Spleen (tissue), 13 donors: ENCODE measurements at regions of chr12 and their contacts with region 1.

Region 1: GRCh38 chr12:109713187-109713984 is at the start of gene FAM222A:
- DNase-seq: peak; percentile 99
- H3K4me3 ChIP-seq: peak within 1 kb of the TSS; percentile 72 to 95 (median 90)
- H3K27ac ChIP-seq: peak within 1 kb of the TSS in 7 of 8 donors; percentile 26 to 79 (median 68)
- H3K4me1 ChIP-seq: peaks cover 4 to 56% (median 26%) of the 10 kb centered on the region in 6 donors
- H3K27me3 ChIP-seq: peaks cover 0 to 89% (median 23%) of the 10 kb centered on the region in 7 donors
- CTCF ChIP-seq: peak in 6 of 11 experiments; percentile 28 to 61 (median 40)
- POLR2A ChIP-seq: peak in 1 of 3 donors; percentile 49
- total RNA-seq, gene FAM222A: 13.9 to 30.7 (median 21.5) TPM

Region 2: DNA sequence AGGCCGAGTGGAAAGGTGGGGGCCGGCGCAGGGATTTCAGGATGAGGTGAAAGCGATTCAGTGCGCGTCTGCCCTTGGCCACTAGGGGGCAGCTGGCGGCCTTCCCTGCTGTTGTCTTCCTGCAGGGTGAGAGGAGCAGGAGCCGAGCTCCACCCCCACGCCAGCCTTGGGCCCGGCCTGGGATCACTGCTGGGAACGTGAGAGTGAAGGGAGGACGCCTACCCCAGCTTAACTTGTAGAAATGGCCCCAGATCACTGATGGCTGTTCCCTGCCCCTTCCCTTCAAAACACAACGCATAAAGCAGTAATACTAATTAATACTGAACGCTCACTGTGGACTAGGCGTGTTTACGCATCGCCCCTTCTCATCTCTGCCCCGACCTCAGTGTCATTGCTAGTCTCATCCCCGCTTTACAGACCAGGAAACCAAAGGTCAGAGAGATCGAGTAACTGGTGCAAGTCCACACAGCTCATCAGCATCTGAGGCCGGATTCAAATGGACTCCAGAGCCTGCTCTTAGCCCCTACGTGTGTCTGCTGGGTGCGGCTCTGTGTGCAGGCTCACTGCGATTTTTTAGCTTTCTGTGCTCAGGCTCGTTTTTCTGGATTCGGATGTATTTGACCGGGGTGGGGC is 115.5 kb before region 1 on chr12:
- intact Hi-C with region 1: loop called (anchors 10 kb)
- DNase-seq: peak; percentile 92
- H3K4me3 ChIP-seq: no peak overlapping the region
- H3K27ac ChIP-seq: no peak overlapping the region
- H3K4me1 ChIP-seq: peaks cover 6 to 41% (median 16%) of the 10 kb centered on the region in 6 donors
- H3K27me3 ChIP-seq: no peaks in the 10 kb centered on the region
- CTCF ChIP-seq: peak; percentile 56 to 96 (median 92)
- POLR2A ChIP-seq: no peak

Region 3: GRCh38 chr12:109626378-109627115 is 86.8 kb before region 1 on chr12:
- intact Hi-C with region 1: no loop called
- DNase-seq: no peak
- H3K4me3 ChIP-seq: no peak overlapping the region
- H3K27ac ChIP-seq: no peak overlapping the region
- H3K4me1 ChIP-seq: peaks cover 0 to 9% (median 0%) of the 10 kb centered on the region in 6 donors
- H3K27me3 ChIP-seq: peaks cover 0 to 90% (median 16%) of the 10 kb centered on the region in 7 donors
- CTCF ChIP-seq: no peak
- POLR2A ChIP-seq: no peak